Right ventricle myocardium inferior (tissue), 1 donor: ENCODE measurements at regions of chr4 and their contacts with region 1.

Region 1: GRCh38 chr4:39852636-39853035 is 125.1 kb downstream of the PDS5A start:
- DNase-seq: no peak
- ATAC-seq: no peak

Region 2: DNA sequence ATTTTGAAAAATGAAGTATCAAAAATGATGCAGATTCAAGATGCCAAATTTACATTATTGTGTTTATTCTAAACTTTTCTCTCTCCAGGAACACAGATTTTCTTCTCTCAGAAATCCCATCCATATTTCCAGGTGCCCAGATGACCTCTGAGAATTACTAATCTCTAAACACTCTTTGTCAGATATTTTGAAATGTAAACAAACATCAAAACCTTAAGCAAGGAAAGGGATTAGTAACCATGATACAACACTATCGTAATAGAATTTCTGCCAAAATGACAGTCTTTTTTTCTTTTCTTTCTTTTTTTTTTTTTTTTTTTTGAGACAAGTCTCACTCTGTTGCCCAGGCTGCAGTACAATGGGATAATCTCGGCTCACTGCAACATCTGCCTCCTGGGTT is 48.3 kb after region 1 on chr4:
- intact Hi-C with region 1: loop called (anchors 2 kb)
- DNase-seq: no peak
- ATAC-seq: no peak

Region 3: GRCh38 chr4:40388239-40388985 is 535.8 kb after region 1 on chr4:
- intact Hi-C with region 1: no loop called
- DNase-seq: no peak
- ATAC-seq: no peak